ENCODE measurements at regions of chr17 and their contacts with region 1.

Region 1: GRCh38 chr17:75784473-75785015 is at the start of gene UNK:
- DNase-seq: peak; percentile 98 to 99 (median 99)
- H3K4me3 ChIP-seq: peak within 1 kb of the TSS; percentile 49 to 77 (median 74)
- H3K4me3 Mint-ChIP-seq: peak within 1 kb of the TSS; percentile 72 to 86
- H3K27ac ChIP-seq: peak within 1 kb of the TSS; percentile 97 to 100
- H3K27ac Mint-ChIP-seq: peak within 1 kb of the TSS; percentile 97 to 99 (median 98)
- H3K4me1 ChIP-seq: peaks cover 51 to 63% of the 10 kb centered on the region in 2 donors
- H3K4me1 Mint-ChIP-seq: peaks cover 43% of the 10 kb centered on the region
- H3K27me3 ChIP-seq: no peaks in the 10 kb centered on the region
- H3K27me3 Mint-ChIP-seq: peaks cover 0 to 2% (median 1%) of the 10 kb centered on the region in 3 donors
- CTCF ChIP-seq: no peak
- polyA plus RNA-seq, gene UNK: 6.3 to 12.9 (median 7.8) TPM

Region 2: GRCh38 chr17:75589012-75589918 is 195.3 kb before region 1 on chr17:
- intact Hi-C with region 1: no loop called
- DNase-seq: peak; percentile 81 to 91 (median 86)
- H3K4me3 ChIP-seq: peak overlapping the region; percentile 65 to 88 (median 80)
- H3K4me3 Mint-ChIP-seq: peak overlapping the region; percentile 83 to 87
- H3K27ac ChIP-seq: peak overlapping the region; percentile 88 to 89
- H3K27ac Mint-ChIP-seq: peak overlapping the region in 6 of 7 donors; percentile 75 to 87 (median 84)
- H3K4me1 ChIP-seq: peaks cover 21 to 30% of the 10 kb centered on the region in 2 donors
- H3K4me1 Mint-ChIP-seq: peaks cover 16% of the 10 kb centered on the region
- H3K27me3 ChIP-seq: no peaks in the 10 kb centered on the region
- H3K27me3 Mint-ChIP-seq: peaks cover 0 to 2% (median 0%) of the 10 kb centered on the region in 3 donors
- CTCF ChIP-seq: peak; percentile 75

Region 3: GRCh38 chr17:75830164-75830929 is 45.8 kb after region 1 on chr17:
- intact Hi-C with region 1: no loop called
- DNase-seq: no peak
- H3K4me3 ChIP-seq: no peak overlapping the region
- H3K4me3 Mint-ChIP-seq: no peak overlapping the region
- H3K27ac ChIP-seq: peak overlapping the region in 1 of 2 donors; percentile 58
- H3K27ac Mint-ChIP-seq: peak overlapping the region in 5 of 7 donors; percentile 63 to 93 (median 83)
- H3K4me1 ChIP-seq: peaks cover 14 to 29% of the 10 kb centered on the region in 2 donors
- H3K4me1 Mint-ChIP-seq: peaks cover 31% of the 10 kb centered on the region
- H3K27me3 ChIP-seq: no peaks in the 10 kb centered on the region
- H3K27me3 Mint-ChIP-seq: peaks cover 0 to 2% (median 0%) of the 10 kb centered on the region in 3 donors
- CTCF ChIP-seq: peak; percentile 77

Region 4: GRCh38 chr17:75978938-75979704 is 194.6 kb after region 1 on chr17 and contains the starts of genes ACOX1 and TEN1:
- intact Hi-C with region 1: loop called in 1 of 2 experiments (anchors 10 kb)
- DNase-seq: peak; percentile 93 to 96 (median 94)
- H3K4me3 ChIP-seq: peak within 1 kb of the TSS; percentile 64 to 100 (median 96)
- H3K4me3 Mint-ChIP-seq: peak within 1 kb of the TSS; percentile 93 to 99
- H3K27ac ChIP-seq: peak within 1 kb of the TSS; percentile 94 to 100
- H3K27ac Mint-ChIP-seq: peak within 1 kb of the TSS; percentile 98 to 100 (median 99)
- H3K4me1 ChIP-seq: peaks cover 51 to 59% of the 10 kb centered on the region in 2 donors
- H3K4me1 Mint-ChIP-seq: peaks cover 53% of the 10 kb centered on the region
- H3K27me3 ChIP-seq: no peaks in the 10 kb centered on the region
- H3K27me3 Mint-ChIP-seq: no peaks in the 10 kb centered on the region
- CTCF ChIP-seq: peak; percentile 50
- polyA plus RNA-seq, gene ACOX1: 21.6 to 49.7 (median 49.2) TPM
- polyA plus RNA-seq, gene TEN1: 22.4 to 37.2 (median 31.3) TPM

Region 5: GRCh38 chr17:76527430-76528111 is 743.0 kb after region 1 on chr17:
- intact Hi-C with region 1: no loop called
- DNase-seq: peak in 1 of 3 donors; percentile 56
- H3K4me3 ChIP-seq: no peak overlapping the region
- H3K4me3 Mint-ChIP-seq: peak overlapping the region in 1 of 2 donors; percentile 82
- H3K27ac ChIP-seq: no peak overlapping the region
- H3K27ac Mint-ChIP-seq: peak overlapping the region in 1 of 7 donors; percentile 9
- H3K4me1 ChIP-seq: peaks cover 4 to 24% of the 10 kb centered on the region in 2 donors
- H3K4me1 Mint-ChIP-seq: peaks cover 24% of the 10 kb centered on the region
- H3K27me3 ChIP-seq: peaks cover 0 to 27% of the 10 kb centered on the region in 2 donors
- H3K27me3 Mint-ChIP-seq: peaks cover 20 to 37% (median 28%) of the 10 kb centered on the region in 3 donors
- CTCF ChIP-seq: no peak

Measured in CD14-positive monocyte (primary cell).